Heart right ventricle (tissue), 16 donors: ENCODE measurements at regions of chr16 and their contacts with region 1.

Region 1: DNA sequence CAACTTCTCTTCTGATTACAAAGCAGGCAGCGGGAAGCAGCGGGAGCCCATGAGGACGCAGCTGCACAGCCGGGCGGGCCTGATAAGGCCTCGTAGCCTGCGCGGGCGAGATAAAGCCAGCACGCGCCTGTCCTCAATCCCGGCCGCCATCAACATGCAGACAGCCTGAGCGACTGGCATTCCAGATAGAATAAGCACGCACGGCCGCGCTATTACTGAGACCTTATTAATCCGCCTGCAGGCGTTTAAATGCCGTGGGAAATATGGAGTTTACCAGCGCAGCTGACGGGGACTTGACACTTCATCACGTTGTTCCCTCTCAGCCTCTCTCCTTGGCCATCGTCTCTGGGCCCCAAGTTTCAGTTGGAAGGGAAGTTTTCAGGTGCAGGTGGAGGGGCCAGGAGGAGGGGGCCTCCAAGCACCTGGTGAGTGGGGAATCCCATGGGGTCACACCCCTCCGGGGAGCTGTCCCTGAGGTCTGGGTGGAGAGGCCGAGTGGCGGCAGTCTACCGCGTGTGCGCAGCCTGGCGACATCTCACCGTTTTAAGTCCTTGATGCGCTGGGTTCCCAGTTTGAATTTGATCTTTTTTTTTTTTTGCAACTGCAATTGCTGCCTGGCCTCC is 27.3 kb upstream of the CBFA2T3 start:
- DNase-seq: peak; percentile 38 to 51
- ATAC-seq: peak; percentile 80 to 91 (median 89)
- H3K4me3 ChIP-seq: no peak overlapping the region
- H3K27ac ChIP-seq: no peak overlapping the region
- H3K4me1 ChIP-seq: peaks cover 5 to 16% (median 14%) of the 10 kb centered on the region in 9 donors
- H3K27me3 ChIP-seq: peaks cover 0 to 60% (median 54%) of the 10 kb centered on the region in 7 donors
- CTCF ChIP-seq: no peak

Region 2: GRCh38 chr16:88936556-88937205 is 67.6 kb before region 1 on chr16:
- intact Hi-C with region 1: no loop called
- DNase-seq: peak; percentile 53 to 60
- ATAC-seq: peak in 7 of 8 donors; percentile 1 to 21 (median 14)
- H3K4me3 ChIP-seq: peak overlapping the region in 8 of 10 donors; percentile 11 to 34 (median 26)
- H3K27ac ChIP-seq: peak overlapping the region; percentile 59 to 95 (median 90)
- H3K4me1 ChIP-seq: peaks cover 25 to 66% (median 51%) of the 10 kb centered on the region in 9 donors
- H3K27me3 ChIP-seq: peaks cover 0 to 26% (median 8%) of the 10 kb centered on the region in 7 donors
- CTCF ChIP-seq: no peak

Region 3: GRCh38 chr16:89064606-89065457 is 60.5 kb after region 1 on chr16:
- intact Hi-C with region 1: loop called in 1 of 10 experiments (anchors 2 kb)
- DNase-seq: no peak
- ATAC-seq: peak in 1 of 8 donors; percentile 20
- H3K4me3 ChIP-seq: no peak overlapping the region
- H3K27ac ChIP-seq: no peak overlapping the region
- H3K4me1 ChIP-seq: no peaks in the 10 kb centered on the region
- H3K27me3 ChIP-seq: peaks cover 0 to 52% (median 18%) of the 10 kb centered on the region in 7 donors
- CTCF ChIP-seq: no peak

Region 4: GRCh38 chr16:89093602-89094251 is 89.4 kb after region 1 on chr16 and contains the start of gene ACSF3:
- intact Hi-C with region 1: no loop called
- DNase-seq: peak; percentile 51 to 76
- ATAC-seq: peak; percentile 84 to 94 (median 89)
- H3K4me3 ChIP-seq: peak within 1 kb of the TSS; percentile 65 to 97 (median 88)
- H3K27ac ChIP-seq: peak within 1 kb of the TSS in 9 of 10 donors; percentile 70 to 87 (median 80)
- H3K4me1 ChIP-seq: peaks cover 0 to 52% (median 24%) of the 10 kb centered on the region in 9 donors
- H3K27me3 ChIP-seq: peaks cover 0 to 36% (median 29%) of the 10 kb centered on the region in 7 donors
- CTCF ChIP-seq: no peak
- total RNA-seq, gene ACSF3: 11.0 to 22.5 (median 17.8) TPM

Region 5: GRCh38 chr16:89155184-89155679 is 150.9 kb after region 1 on chr16:
- intact Hi-C with region 1: no loop called
- DNase-seq: peak; percentile 68 to 74
- ATAC-seq: peak; percentile 66 to 89 (median 78)
- H3K4me3 ChIP-seq: no peak overlapping the region
- H3K27ac ChIP-seq: peak overlapping the region in 3 of 10 donors; percentile 3 to 38 (median 4)
- H3K4me1 ChIP-seq: peaks cover 17 to 30% (median 28%) of the 10 kb centered on the region in 9 donors
- H3K27me3 ChIP-seq: peaks cover 0 to 8% (median 0%) of the 10 kb centered on the region in 7 donors
- CTCF ChIP-seq: no peak